Prostate gland (tissue), 2 donors: ENCODE measurements at regions of chr2 and their contacts with region 1.

Region 1: GRCh38 chr2:177212106-177212890 is at the start of gene HNRNPA3:
- DNase-seq: peak; percentile 99
- H3K4me3 ChIP-seq: peak within 1 kb of the TSS; percentile 78 to 85
- H3K27ac ChIP-seq: peak within 1 kb of the TSS; percentile 99
- H3K4me1 ChIP-seq: peaks cover 9% of the 10 kb centered on the region
- H3K27me3 ChIP-seq: no peaks in the 10 kb centered on the region
- CTCF ChIP-seq: peak in 3 of 4 experiments; percentile 27 to 44 (median 32)
- POLR2A ChIP-seq: peak; percentile 91
- total RNA-seq, gene HNRNPA3: 56.5 to 57.0 TPM

Region 2: GRCh38 chr2:176261136-176261535 is 951.2 kb before region 1 on chr2:
- intact Hi-C with region 1: no loop called
- DNase-seq: no peak
- H3K4me3 ChIP-seq: no peak overlapping the region
- H3K27ac ChIP-seq: no peak overlapping the region
- H3K4me1 ChIP-seq: peaks cover 5% of the 10 kb centered on the region
- H3K27me3 ChIP-seq: no peaks in the 10 kb centered on the region
- CTCF ChIP-seq: no peak
- POLR2A ChIP-seq: no peak

Region 3: GRCh38 chr2:177263451-177264208 is 51.3 kb after region 1 on chr2:
- intact Hi-C with region 1: loop called (anchors 1 kb)
- DNase-seq: peak; percentile 98
- H3K4me3 ChIP-seq: peak overlapping the region; percentile 95 to 99
- H3K27ac ChIP-seq: peak overlapping the region; percentile 99 to 100
- H3K4me1 ChIP-seq: no peaks in the 10 kb centered on the region
- H3K27me3 ChIP-seq: no peaks in the 10 kb centered on the region
- CTCF ChIP-seq: peak; percentile 64 to 96 (median 91)
- POLR2A ChIP-seq: peak; percentile 65

Region 4: DNA sequence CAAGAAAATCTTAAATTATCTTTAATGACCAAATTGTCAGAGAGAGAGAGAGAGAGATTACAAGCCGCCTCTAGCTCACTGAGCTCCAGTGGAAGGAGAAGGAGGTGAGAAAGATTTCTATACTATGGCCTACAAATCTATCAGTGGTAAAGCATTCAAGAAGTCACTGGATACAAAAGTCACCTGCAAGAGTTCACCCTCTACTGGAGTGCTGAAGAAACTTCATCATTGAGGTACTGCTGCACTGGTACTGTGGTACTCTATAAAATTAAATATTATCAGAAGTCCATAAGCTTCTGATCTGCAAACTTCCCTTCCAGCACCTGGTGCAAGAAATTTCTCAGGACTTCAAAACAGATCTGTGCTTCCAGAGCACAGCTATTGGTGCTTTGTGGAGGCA is 132.0 kb after region 1 on chr2:
- intact Hi-C with region 1: no loop called
- DNase-seq: no peak
- H3K4me3 ChIP-seq: no peak overlapping the region
- H3K27ac ChIP-seq: no peak overlapping the region
- H3K4me1 ChIP-seq: no peaks in the 10 kb centered on the region
- H3K27me3 ChIP-seq: no peaks in the 10 kb centered on the region
- CTCF ChIP-seq: no peak
- POLR2A ChIP-seq: no peak

Region 5: GRCh38 chr2:177392373-177393202 is 180.3 kb after region 1 on chr2 and contains the start of gene AGPS:
- intact Hi-C with region 1: no loop called
- DNase-seq: peak; percentile 22
- H3K4me3 ChIP-seq: peak within 1 kb of the TSS; percentile 57 to 59
- H3K27ac ChIP-seq: peak within 1 kb of the TSS in 1 of 2 donors; percentile 41
- H3K4me1 ChIP-seq: peaks cover 6% of the 10 kb centered on the region
- H3K27me3 ChIP-seq: no peaks in the 10 kb centered on the region
- CTCF ChIP-seq: peak in 2 of 4 experiments; percentile 36 to 49
- POLR2A ChIP-seq: no peak
- total RNA-seq, gene AGPS: 17.2 to 50.3 TPM